WTC11 (cell line): ENCODE measurements at regions of chr16 and their contacts with region 1.

Region 1: DNA sequence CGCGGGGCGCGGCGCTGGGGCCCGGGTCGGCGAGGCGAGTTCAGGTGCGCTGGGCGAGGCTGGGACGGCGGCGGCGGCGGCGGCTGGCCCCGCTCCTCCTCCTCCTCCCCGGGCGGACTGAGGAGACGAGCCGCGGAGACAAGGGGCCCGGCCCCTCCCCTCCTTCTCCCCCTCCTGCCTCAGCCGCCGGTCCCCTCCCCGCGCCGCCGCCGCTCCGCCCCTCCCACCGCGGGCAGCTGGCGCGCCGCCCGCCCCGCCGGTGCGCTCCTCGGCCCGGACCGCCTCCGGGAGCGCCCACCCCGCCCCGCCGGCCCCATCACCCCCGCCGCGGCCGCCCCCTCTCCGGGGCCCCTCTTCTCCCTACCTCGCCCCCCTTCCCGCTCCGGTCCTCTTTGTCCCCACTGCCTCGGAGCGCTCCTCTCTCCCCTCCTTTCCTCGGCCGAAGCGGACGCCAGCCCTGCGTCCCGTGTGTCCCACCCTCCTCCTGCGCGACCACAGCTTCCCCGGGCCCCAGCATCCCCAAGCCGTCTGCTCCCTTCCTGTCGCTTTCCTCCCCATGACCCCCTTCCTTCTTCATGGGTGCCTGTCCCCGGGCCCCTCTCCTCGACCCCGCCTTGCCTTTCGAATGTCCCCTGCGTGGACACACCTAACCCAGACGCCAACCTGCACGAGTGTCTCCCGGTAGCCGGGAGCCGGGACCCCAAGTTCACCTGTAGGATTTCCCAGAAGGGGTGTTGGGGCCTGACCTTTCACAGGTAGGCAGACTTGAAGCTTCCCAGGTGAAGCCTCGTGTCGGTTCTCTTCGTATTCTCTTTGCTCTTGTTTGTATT is at the start of gene TOX3:
- DNase-seq: peak; percentile 67
- ATAC-seq: peak; percentile 44
- H3K4me3 Mint-ChIP-seq: peak within 1 kb of the TSS; percentile 91
- H3K27ac Mint-ChIP-seq: no peak within 1 kb of the TSS; the same call in 1 of the 2 replicates
- H3K4me1 Mint-ChIP-seq: peaks cover 51% of the 10 kb centered on the region
- H3K27me3 Mint-ChIP-seq: peaks cover 49% of the 10 kb centered on the region
- CTCF ChIP-seq: no peak
- total RNA-seq, gene TOX3: 17.6 to 20.2 TPM (median 19.3 TPM) in 3 replicates

Region 2: GRCh38 chr16:52389045-52389444 is 158.2 kb before region 1 on chr16:
- CTCF ChIA-PET with region 1: no interaction called
- POLR2A ChIA-PET with region 1: no interaction called
- DNase-seq: no peak
- ATAC-seq: no peak
- H3K4me3 Mint-ChIP-seq: no peak overlapping the region
- H3K27ac Mint-ChIP-seq: no peak overlapping the region
- H3K4me1 Mint-ChIP-seq: no peaks in the 10 kb centered on the region
- H3K27me3 Mint-ChIP-seq: no peaks in the 10 kb centered on the region
- CTCF ChIP-seq: no peak

Region 3: DNA sequence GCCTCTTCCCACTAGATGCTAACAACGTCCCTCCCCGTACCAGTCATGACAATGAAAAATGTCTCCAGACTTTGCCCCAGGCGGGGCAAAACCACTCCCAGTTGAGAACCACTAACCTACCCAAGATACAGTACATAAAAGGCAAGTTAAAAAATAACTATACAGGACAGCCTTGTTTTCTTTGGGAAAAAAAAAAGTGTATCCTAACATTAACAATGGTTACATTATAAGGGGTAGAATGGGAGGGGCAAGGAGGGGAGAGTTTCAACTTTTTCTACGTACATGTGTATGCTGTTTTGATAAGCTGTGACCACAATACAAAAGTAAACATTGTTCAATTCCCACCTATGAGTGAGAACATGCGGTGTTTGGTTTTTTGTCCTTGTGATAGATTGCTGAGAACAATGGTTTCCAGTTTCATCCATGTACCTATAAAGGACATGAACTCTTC is 95.2 kb before region 1 on chr16:
- CTCF ChIA-PET with region 1: no interaction called
- POLR2A ChIA-PET with region 1: no interaction called
- DNase-seq: no peak
- ATAC-seq: no peak
- H3K4me3 Mint-ChIP-seq: no peak overlapping the region
- H3K27ac Mint-ChIP-seq: no peak overlapping the region
- H3K4me1 Mint-ChIP-seq: peaks cover 41% of the 10 kb centered on the region
- H3K27me3 Mint-ChIP-seq: no peaks in the 10 kb centered on the region
- CTCF ChIP-seq: no peak

Region 4: DNA sequence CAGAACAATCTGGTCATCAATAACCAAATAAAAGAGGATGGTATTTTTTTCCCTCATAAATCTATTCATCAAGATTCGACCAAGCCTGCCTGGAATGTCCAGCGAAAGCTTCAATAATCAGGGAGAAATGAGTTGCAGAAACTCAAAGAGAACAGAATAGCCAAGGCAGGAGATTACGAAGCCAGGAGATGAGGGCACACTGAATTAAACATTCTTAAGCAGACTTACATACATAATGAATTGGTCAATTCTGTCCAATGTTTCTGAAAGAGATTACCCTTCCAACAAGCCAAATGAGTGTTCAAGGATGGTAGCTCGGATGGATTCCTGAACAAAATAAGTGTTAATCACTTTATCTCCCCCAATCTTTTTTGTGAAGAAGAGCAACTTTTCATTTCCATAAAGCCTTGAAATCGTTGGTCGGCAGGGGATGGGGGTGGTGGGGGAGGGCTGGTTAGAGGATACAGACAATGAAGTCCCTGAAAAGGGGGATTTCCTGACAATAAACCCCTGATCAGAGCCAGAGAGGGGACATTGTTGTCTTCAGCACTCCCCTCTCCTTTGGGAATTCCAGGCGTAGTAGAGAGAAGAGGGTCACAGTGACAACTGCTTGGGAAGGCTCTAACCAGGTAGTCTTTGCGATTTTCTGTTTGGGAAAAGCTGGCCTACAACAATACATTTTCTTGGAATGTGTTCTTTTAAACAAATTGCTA is 20.9 kb before region 1 on chr16:
- CTCF ChIA-PET with region 1: interaction called, 11 read pairs
- POLR2A ChIA-PET with region 1: interaction called, 3 read pairs
- DNase-seq: no peak
- ATAC-seq: peak; percentile 68
- H3K4me3 Mint-ChIP-seq: no peak overlapping the region
- H3K27ac Mint-ChIP-seq: peak overlapping the region; percentile 1; the same call in 1 of the 2 replicates
- H3K4me1 Mint-ChIP-seq: peaks cover 91% of the 10 kb centered on the region
- H3K27me3 Mint-ChIP-seq: no peaks in the 10 kb centered on the region
- CTCF ChIP-seq: no peak

Region 5: GRCh38 chr16:52561910-52562741 is 14.9 kb after region 1 on chr16:
- CTCF ChIA-PET with region 1: interaction called, 13 read pairs
- POLR2A ChIA-PET with region 1: no interaction called
- DNase-seq: no peak
- ATAC-seq: peak; percentile 60
- H3K4me3 Mint-ChIP-seq: no peak overlapping the region
- H3K27ac Mint-ChIP-seq: peak overlapping the region; percentile 52; the same call in 1 of the 2 replicates
- H3K4me1 Mint-ChIP-seq: peaks cover 39% of the 10 kb centered on the region
- H3K27me3 Mint-ChIP-seq: peaks cover 2% of the 10 kb centered on the region; the same call in 1 of the 2 replicates
- CTCF ChIP-seq: no peak